GM12878 (cell line): ENCODE measurements at regions of chr3 and their contacts with region 1.

Region 1: DNA sequence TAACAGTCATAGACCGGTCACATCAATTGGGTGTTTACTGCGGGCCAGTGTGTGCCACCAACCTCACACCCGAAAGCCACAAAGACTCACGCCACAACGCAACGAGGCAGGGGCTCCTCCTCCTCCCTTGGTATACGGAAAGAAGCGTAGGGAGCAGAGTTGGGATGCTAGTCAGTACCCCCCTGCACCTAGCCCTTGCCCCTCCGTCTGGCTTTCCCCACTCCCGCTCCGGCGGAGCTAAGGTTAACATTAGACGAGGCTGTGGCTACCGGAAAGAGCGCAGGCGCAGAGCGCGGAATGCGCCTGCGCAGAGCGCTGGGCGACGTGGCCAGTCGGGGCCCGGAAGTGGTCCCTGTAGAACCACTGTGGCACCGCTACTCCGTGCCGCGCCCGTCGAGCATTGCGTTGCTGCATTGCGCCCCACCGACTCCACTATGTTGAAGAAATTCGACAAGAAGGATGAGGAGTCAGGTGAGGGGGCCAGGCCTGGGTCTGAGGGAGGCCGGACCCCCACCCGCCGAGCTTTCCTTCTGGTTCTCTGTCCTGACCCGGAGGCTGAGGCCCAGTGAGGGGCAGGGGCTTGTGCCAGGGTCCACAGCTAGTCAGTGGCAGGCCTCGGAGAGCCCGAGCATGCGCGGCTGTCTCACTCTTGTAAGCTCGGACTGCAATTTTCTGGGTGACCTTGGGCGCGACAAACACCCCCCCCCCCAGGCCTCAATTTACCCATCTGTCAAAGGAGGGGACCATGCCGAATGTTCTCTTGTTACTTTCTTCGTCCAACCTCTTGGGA is at the start of gene COPG1:
- DNase-seq: peak; percentile 72
- ATAC-seq: peak; percentile 92
- H3K4me3 ChIP-seq: peak within 1 kb of the TSS; percentile 84
- H3K27ac ChIP-seq: peak within 1 kb of the TSS; percentile 94
- H3K4me1 ChIP-seq: peaks cover 8% of the 10 kb centered on the region
- H3K27me3 ChIP-seq: no peaks in the 10 kb centered on the region
- CTCF ChIP-seq: no peak
- EP300 ChIP-seq: no peak
- POLR2A ChIP-seq: peak; percentile 98
- RAD21 ChIP-seq: no peak
- polyA plus RNA-seq, gene COPG1: 54.8 to 102 TPM

Region 2: DNA sequence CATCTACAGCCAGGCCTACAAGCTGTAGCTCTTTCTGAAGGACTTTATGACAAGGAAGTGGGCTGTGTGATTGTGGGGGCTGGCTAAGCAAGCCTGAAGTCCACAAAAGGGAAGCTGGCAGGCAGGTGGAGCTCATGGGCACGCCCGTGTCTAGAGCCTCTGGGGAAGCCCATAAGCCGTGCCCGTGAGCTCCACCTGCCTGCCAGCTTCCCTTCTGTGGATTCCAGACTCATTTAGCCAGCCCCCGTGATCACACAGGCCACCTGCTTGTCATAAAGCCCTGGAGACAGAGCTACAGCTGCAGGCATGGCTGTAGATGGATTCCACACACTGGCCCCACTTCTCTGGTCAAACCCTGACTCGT is 233.1 kb before region 1 on chr3:
- CTCF ChIA-PET with region 1: interaction called, 14 read pairs
- POLR2A ChIA-PET with region 1: no interaction called
- RAD21 ChIA-PET with region 1: interaction called, 6 read pairs
- SMC1A ChIA-PET with region 1: interaction called, 11 read pairs
- in situ Hi-C with region 1: no loop called
- intact Hi-C with region 1: no loop called
- DNase-seq: no peak
- ATAC-seq: peak; percentile 77
- H3K4me3 ChIP-seq: no peak overlapping the region
- H3K27ac ChIP-seq: no peak overlapping the region
- H3K4me1 ChIP-seq: peaks cover 19% of the 10 kb centered on the region
- H3K27me3 ChIP-seq: no peaks in the 10 kb centered on the region
- CTCF ChIP-seq: peak in 1 of 3 experiments; percentile 12; a peak in 1 of 6 replicates
- EP300 ChIP-seq: no peak
- POLR2A ChIP-seq: no peak
- RAD21 ChIP-seq: no peak

Region 3: DNA sequence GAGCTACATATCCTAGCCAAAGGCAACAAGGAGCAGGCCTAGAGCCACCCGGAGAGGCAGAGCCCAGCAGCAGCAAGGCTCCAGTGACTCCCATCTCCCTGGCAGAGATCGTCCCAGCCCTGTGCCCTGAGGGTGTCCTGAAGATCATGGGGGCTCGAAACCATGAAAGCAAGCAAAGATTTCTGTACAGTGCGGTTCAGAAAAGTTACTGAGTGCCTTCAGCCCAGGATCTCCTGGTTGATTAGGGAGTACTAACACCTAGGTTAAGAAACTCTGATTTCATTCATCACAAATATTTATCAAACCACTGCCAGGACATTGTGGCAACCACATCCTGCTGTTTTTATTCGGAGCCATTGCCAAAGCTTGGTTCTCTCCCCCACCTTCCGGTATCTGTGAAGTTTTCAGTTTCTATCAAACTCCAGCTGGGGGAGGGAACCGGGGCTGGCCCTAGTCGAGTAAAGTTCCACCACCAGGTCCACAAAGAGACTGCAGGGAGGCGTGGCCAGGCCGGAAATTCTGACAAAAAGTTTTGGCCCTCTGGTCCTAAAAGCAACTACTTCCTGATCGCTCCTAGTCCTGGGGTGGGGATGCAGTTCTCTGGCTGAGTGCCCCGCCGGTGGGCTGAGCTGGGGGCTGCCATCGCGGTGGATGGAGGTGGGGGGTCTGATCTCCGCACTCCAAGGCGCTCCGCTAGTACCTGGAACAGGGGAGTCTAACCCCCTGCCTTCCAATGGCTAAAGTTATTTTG is 129.0 kb before region 1 on chr3:
- CTCF ChIA-PET with region 1: interaction called, 6 read pairs
- POLR2A ChIA-PET with region 1: interaction called, 15 read pairs
- RAD21 ChIA-PET with region 1: interaction called, 20 read pairs
- SMC1A ChIA-PET with region 1: interaction called, 8 read pairs
- in situ Hi-C with region 1: no loop called
- intact Hi-C with region 1: no loop called
- DNase-seq: peak; percentile 89
- ATAC-seq: peak; percentile 82
- H3K4me3 ChIP-seq: peak overlapping the region; percentile 65
- H3K27ac ChIP-seq: peak overlapping the region; percentile 97
- H3K4me1 ChIP-seq: peaks cover 27% of the 10 kb centered on the region
- H3K27me3 ChIP-seq: no peaks in the 10 kb centered on the region
- CTCF ChIP-seq: peak; percentile 13 to 19 (median 18); a peak in 4 of 6 replicates
- EP300 ChIP-seq: no peak
- POLR2A ChIP-seq: peak; percentile 82
- RAD21 ChIP-seq: 0 out of 2 replicates have a peak, but pooled peaks have one; percentile 27

Region 4: GRCh38 chr3:129183569-129184395 is 65.7 kb before region 1 on chr3 and contains the start of gene CNBP:
- CTCF ChIA-PET with region 1: interaction called, 17 read pairs
- POLR2A ChIA-PET with region 1: interaction called, 5 read pairs
- RAD21 ChIA-PET with region 1: interaction called, 4 read pairs
- SMC1A ChIA-PET with region 1: interaction called, 3 read pairs
- in situ Hi-C with region 1: no loop called
- intact Hi-C with region 1: loop called (anchors 5 kb)
- DNase-seq: peak; percentile 65
- ATAC-seq: peak; percentile 97
- H3K4me3 ChIP-seq: peak within 1 kb of the TSS; percentile 97
- H3K27ac ChIP-seq: peak within 1 kb of the TSS; percentile 97
- H3K4me1 ChIP-seq: peaks cover 9% of the 10 kb centered on the region
- H3K27me3 ChIP-seq: no peaks in the 10 kb centered on the region
- CTCF ChIP-seq: no peak
- EP300 ChIP-seq: no peak
- POLR2A ChIP-seq: peak; percentile 98
- RAD21 ChIP-seq: no peak
- polyA plus RNA-seq, gene CNBP: 618 to 719 TPM

Region 5: GRCh38 chr3:129278439-129278970 is 29.0 kb after region 1 on chr3 and contains the start of gene HMCES:
- CTCF ChIA-PET with region 1: interaction called, 8 read pairs
- POLR2A ChIA-PET with region 1: interaction called, 6 read pairs
- RAD21 ChIA-PET with region 1: interaction called, 6 read pairs
- SMC1A ChIA-PET with region 1: interaction called, 8 read pairs
- in situ Hi-C with region 1: no loop called
- intact Hi-C with region 1: loop called (anchors 1 kb)
- DNase-seq: peak; percentile 31
- ATAC-seq: peak; percentile 75
- H3K4me3 ChIP-seq: peak within 1 kb of the TSS; percentile 76
- H3K27ac ChIP-seq: peak within 1 kb of the TSS; percentile 80
- H3K4me1 ChIP-seq: peaks cover 58% of the 10 kb centered on the region
- H3K27me3 ChIP-seq: no peaks in the 10 kb centered on the region
- CTCF ChIP-seq: no peak
- EP300 ChIP-seq: 0 out of 4 replicates have a peak, but pooled peaks of 1 of the 2 experiments have one; percentile 14
- POLR2A ChIP-seq: peak; percentile 88
- RAD21 ChIP-seq: no peak
- polyA plus RNA-seq, gene HMCES: 17.2 to 18.5 TPM

Region 6: GRCh38 chr3:129424185-129424841 is 174.8 kb after region 1 on chr3:
- CTCF ChIA-PET with region 1: no interaction called
- POLR2A ChIA-PET with region 1: no interaction called
- RAD21 ChIA-PET with region 1: no interaction called
- SMC1A ChIA-PET with region 1: no interaction called
- in situ Hi-C with region 1: no loop called
- intact Hi-C with region 1: no loop called
- DNase-seq: peak; percentile 66
- ATAC-seq: peak; percentile 92
- H3K4me3 ChIP-seq: no peak overlapping the region
- H3K27ac ChIP-seq: peak overlapping the region; percentile 66
- H3K4me1 ChIP-seq: peaks cover 26% of the 10 kb centered on the region
- H3K27me3 ChIP-seq: no peaks in the 10 kb centered on the region
- CTCF ChIP-seq: no peak
- EP300 ChIP-seq: no peak
- POLR2A ChIP-seq: no peak
- RAD21 ChIP-seq: no peak